HepG2 (cell line): ENCODE measurements at regions of chr7 and their contacts with region 1.

Region 1: DNA sequence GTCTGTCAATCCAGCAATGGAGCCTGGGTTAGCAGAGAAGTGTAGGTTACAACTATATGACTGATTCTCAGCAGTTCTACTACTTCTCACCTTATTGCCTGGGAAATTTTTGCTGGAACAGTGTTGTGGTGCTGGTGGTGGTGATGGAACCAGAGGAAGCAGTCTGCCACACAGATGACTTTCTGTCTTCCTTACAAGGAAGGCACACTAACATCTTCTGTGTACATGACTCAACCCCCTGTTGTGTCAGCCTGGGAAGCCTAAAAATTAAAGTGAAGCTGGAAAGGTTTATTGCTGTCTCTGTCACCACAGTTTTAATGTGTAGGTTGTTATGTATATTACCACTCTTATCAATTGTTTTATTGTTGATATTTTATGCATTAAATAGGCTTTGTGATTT is 40.3 kb downstream of the ANKRD7 start:
- DNase-seq: no peak
- ATAC-seq: no peak
- H3K4me3 ChIP-seq: no peak overlapping the region
- H3K27ac ChIP-seq: no peak overlapping the region
- H3K4me1 ChIP-seq: no peaks in the 10 kb centered on the region
- H3K27me3 ChIP-seq: no peaks in the 10 kb centered on the region
- CTCF ChIP-seq: no peak
- EP300 ChIP-seq: no peak
- POLR2A ChIP-seq: no peak
- RAD21 ChIP-seq: no peak

Region 2: GRCh38 chr7:118202061-118202460 is 62.8 kb before region 1 on chr7:
- CTCF ChIA-PET with region 1: no interaction called
- POLR2A ChIA-PET with region 1: no interaction called
- in situ Hi-C with region 1: no loop called
- intact Hi-C with region 1: loop called (anchors 10 kb)
- DNase-seq: no peak
- ATAC-seq: no peak
- H3K4me3 ChIP-seq: no peak overlapping the region
- H3K27ac ChIP-seq: no peak overlapping the region
- H3K4me1 ChIP-seq: no peaks in the 10 kb centered on the region
- H3K27me3 ChIP-seq: no peaks in the 10 kb centered on the region
- CTCF ChIP-seq: no peak
- EP300 ChIP-seq: no peak
- POLR2A ChIP-seq: no peak
- RAD21 ChIP-seq: no peak

Region 3: DNA sequence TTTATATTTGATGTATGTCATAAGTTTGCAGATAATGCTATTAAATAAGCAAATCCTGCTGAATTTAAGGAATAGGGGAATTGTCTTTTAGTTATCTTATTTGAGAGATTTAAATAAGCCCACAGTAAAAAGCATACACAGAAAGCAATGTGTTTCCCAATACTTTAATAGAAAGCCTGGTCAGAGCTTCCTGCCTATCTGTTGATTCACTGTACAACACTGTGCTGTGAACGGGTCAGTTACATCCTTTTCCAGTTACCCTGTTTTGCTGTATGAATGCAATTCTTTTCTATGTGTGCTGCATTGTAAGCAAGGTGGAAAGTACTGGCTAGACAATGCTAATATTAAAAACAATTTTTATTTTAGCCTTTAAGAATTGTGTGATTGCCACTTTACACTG is 40.8 kb after region 1 on chr7:
- CTCF ChIA-PET with region 1: no interaction called
- POLR2A ChIA-PET with region 1: no interaction called
- in situ Hi-C with region 1: no loop called
- intact Hi-C with region 1: no loop called
- DNase-seq: no peak
- ATAC-seq: no peak
- H3K4me3 ChIP-seq: no peak overlapping the region
- H3K27ac ChIP-seq: no peak overlapping the region
- H3K4me1 ChIP-seq: no peaks in the 10 kb centered on the region
- H3K27me3 ChIP-seq: no peaks in the 10 kb centered on the region
- CTCF ChIP-seq: no peak
- EP300 ChIP-seq: no peak
- POLR2A ChIP-seq: no peak
- RAD21 ChIP-seq: no peak

Region 4: DNA sequence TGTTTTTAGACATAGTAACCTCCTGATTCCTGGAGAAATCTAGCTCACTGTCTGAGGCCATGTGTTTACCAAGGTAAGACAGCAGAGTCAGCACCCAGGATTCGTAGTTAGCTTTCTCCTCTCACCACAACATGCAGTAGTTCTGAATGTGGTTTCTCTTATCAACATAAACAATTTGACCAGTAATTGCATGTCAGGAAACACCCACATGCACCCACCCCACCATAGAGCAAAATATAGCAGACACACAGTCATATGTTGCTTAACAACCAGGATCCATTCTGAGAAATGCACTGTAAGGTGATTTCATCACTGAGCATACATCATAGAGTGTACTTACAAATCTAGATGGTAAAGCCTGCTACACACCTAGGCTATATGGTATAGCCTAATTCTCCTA is 963.6 kb after region 1 on chr7:
- CTCF ChIA-PET with region 1: no interaction called
- POLR2A ChIA-PET with region 1: no interaction called
- in situ Hi-C with region 1: no loop called
- intact Hi-C with region 1: loop called (anchors 5 kb)
- DNase-seq: no peak
- ATAC-seq: no peak
- H3K4me3 ChIP-seq: no peak overlapping the region
- H3K27ac ChIP-seq: no peak overlapping the region
- H3K4me1 ChIP-seq: no peaks in the 10 kb centered on the region
- H3K27me3 ChIP-seq: no peaks in the 10 kb centered on the region
- CTCF ChIP-seq: no peak
- EP300 ChIP-seq: no peak
- POLR2A ChIP-seq: no peak
- RAD21 ChIP-seq: no peak